ENCODE measurements at regions of chr20 and their contacts with region 1.

Region 1: GRCh38 chr20:35849706-35850105 is 77.9 kb downstream of the PHF20 start:
- DNase-seq: no peak
- H3K4me3 ChIP-seq: no peak overlapping the region
- CTCF ChIP-seq: no peak
- POLR2A ChIP-seq: no peak

Region 2: DNA sequence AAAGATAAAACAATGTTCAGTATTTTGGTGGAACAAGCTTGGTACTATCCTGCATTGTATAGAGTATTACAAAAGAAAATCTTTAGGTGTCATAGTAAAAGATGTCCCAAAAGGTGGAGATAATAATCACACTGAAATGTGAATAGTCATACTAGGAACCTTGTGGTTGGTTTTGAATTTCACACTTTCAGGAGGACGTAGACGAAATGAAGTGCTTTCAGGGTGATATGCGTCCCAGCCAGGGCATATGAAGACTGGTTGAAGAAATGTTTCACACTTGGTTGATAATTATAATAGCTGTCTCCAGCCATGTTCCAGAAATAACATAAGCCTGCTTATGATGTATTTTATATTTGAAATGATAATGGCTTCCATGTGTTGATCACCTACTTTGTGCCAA is 44.2 kb after region 1 on chr20:
- intact Hi-C with region 1: loop called (anchors 2 kb)
- DNase-seq: no peak
- H3K4me3 ChIP-seq: no peak overlapping the region
- CTCF ChIP-seq: no peak
- POLR2A ChIP-seq: no peak

Region 3: GRCh38 chr20:35918021-35918420 is 68.3 kb after region 1 on chr20:
- intact Hi-C with region 1: no loop called
- DNase-seq: peak in 1 of 2 donors; percentile 70
- H3K4me3 ChIP-seq: no peak overlapping the region
- CTCF ChIP-seq: no peak
- POLR2A ChIP-seq: no peak

Measured in lower leg skin (tissue), 4 donors.